Dorsolateral prefrontal cortex (tissue), 120 donors: ENCODE measurements at regions of chr10 and their contacts with region 1.

Region 1: GRCh38 chr10:121598207-121598862 is at the start of gene FGFR2:
- DNase-seq: peak; percentile 18 to 85 (median 66)
- H3K4me3 ChIP-seq: peak within 1 kb of the TSS; percentile 49 to 88 (median 75)
- H3K27ac ChIP-seq: peak within 1 kb of the TSS; percentile 83 to 99 (median 96)
- H3K27me3 ChIP-seq: peaks cover 0 to 24% (median 2%) of the 10 kb centered on the region in 45 donors
- CTCF ChIP-seq: peak in 37 of 56 donors; percentile 4 to 60 (median 31)
- total RNA-seq, gene FGFR2: 69.8 to 487 (median 136) TPM

Region 2: GRCh38 chr10:120948889-120949608 is 649.3 kb before region 1 on chr10:
- intact Hi-C with region 1: loop called (anchors 1 to 2 kb)
- DNase-seq: peak; percentile 26 to 88 (median 67)
- H3K4me3 ChIP-seq: peak overlapping the region; percentile 19 to 80 (median 59)
- H3K27ac ChIP-seq: peak overlapping the region in 41 of 59 donors; percentile 4 to 88 (median 61)
- H3K27me3 ChIP-seq: peaks cover 0 to 4% (median 0%) of the 10 kb centered on the region in 45 donors
- CTCF ChIP-seq: peak; percentile 77 to 98 (median 94)

Region 3: GRCh38 chr10:121076776-121077715 is 521.3 kb before region 1 on chr10:
- intact Hi-C with region 1: no loop called
- DNase-seq: no peak
- H3K4me3 ChIP-seq: no peak overlapping the region
- H3K27ac ChIP-seq: no peak overlapping the region
- H3K27me3 ChIP-seq: no peaks in the 10 kb centered on the region
- CTCF ChIP-seq: no peak

Region 4: GRCh38 chr10:121216721-121217181 is 381.6 kb before region 1 on chr10:
- intact Hi-C with region 1: loop called in 1 of 2 experiments (anchors 5 kb)
- DNase-seq: peak; percentile 5 to 87 (median 76)
- H3K4me3 ChIP-seq: peak overlapping the region in 2 of 59 donors; percentile 8 to 19
- H3K27ac ChIP-seq: peak overlapping the region; percentile 59 to 97 (median 91)
- H3K27me3 ChIP-seq: peaks cover 0 to 6% (median 0%) of the 10 kb centered on the region in 45 donors
- CTCF ChIP-seq: peak in 10 of 56 donors; percentile 5 to 42 (median 26)

Region 5: GRCh38 chr10:121324678-121325213 is 273.6 kb before region 1 on chr10:
- intact Hi-C with region 1: loop called in 1 of 2 experiments (anchors 5 kb)
- DNase-seq: no peak
- H3K4me3 ChIP-seq: no peak overlapping the region
- H3K27ac ChIP-seq: no peak overlapping the region
- H3K27me3 ChIP-seq: peaks cover 0 to 5% (median 0%) of the 10 kb centered on the region in 45 donors
- CTCF ChIP-seq: no peak

Region 6: DNA sequence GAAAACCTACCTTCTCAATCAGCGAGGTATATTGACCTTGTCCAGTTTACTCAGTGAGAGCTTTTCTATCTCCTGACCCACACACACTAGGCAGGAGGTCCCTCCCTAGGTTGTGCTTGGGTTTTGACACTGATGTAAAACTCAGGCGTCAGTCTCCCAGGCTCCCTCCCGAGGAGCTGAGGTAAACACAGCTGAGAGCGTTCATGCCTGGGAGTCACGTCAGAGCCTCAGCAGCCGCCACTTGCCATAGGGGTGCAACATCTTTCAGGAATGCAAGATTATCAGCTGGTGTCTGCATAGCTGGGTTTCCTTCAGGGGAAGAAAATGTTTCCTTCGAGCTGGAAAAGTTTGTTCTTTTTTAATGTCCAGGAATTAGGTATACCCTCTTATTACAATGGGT is 70.7 kb before region 1 on chr10:
- intact Hi-C with region 1: loop called (anchors 2 to 5 kb)
- DNase-seq: no peak
- H3K4me3 ChIP-seq: peak overlapping the region in 1 of 59 donors; percentile 7
- H3K27ac ChIP-seq: peak overlapping the region; percentile 82 to 100 (median 97)
- H3K27me3 ChIP-seq: no peaks in the 10 kb centered on the region
- CTCF ChIP-seq: no peak

Region 7: GRCh38 chr10:121734589-121735045 is 136.3 kb after region 1 on chr10:
- intact Hi-C with region 1: loop called in 1 of 2 experiments (anchors 5 kb)
- DNase-seq: peak in 2 of 10 donors; percentile 7 to 56
- H3K4me3 ChIP-seq: peak overlapping the region in 52 of 59 donors; percentile 8 to 61 (median 42)
- H3K27ac ChIP-seq: peak overlapping the region in 8 of 59 donors; percentile 5 to 60 (median 16)
- H3K27me3 ChIP-seq: no peaks in the 10 kb centered on the region
- CTCF ChIP-seq: peak; percentile 62 to 89 (median 83)

Region 8: GRCh38 chr10:121886997-121887622 is 288.8 kb after region 1 on chr10:
- intact Hi-C with region 1: no loop called
- DNase-seq: peak; percentile 10 to 79 (median 68)
- H3K4me3 ChIP-seq: no peak overlapping the region
- H3K27ac ChIP-seq: peak overlapping the region in 6 of 59 donors; percentile 4 to 25 (median 17)
- H3K27me3 ChIP-seq: no peaks in the 10 kb centered on the region
- CTCF ChIP-seq: peak; percentile 61 to 93 (median 85)